ENCODE measurements at regions of chr19 and their contacts with region 1.

Region 1: DNA sequence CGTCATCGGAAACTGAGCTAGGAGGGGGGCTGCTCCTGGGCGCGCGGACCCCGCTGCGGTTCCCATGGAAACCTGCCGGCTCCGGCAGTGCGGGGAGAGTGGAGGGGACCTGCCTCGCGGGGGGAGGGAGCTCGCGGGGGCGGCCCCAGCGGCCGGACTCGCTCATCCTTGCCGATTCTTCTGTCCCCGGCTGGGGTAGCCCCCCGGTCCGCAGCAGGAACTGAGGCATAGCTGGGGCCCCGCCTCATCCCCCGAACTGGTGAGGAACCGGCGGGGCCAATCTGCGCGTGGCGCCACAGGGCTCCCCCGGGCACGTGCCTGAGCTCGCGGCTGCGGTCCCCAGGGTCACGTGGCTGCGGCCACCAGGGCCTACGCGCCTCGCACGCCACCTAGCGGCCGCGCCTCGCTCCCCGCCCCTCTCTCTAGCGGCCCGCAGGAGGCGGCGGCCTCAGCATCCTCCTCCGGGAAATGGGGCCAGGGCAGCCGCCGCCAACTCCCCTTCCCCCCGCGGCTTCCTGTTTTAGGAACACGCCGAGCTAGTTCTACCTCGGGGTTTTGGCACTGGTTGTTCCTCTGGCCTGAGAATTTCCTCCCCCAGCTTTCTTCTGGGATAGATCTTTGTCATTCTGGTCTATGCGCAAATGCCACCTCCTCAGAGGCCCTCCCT is 1.7 kb upstream of the ELAVL3 start:
- DNase-seq: peak; percentile 79 to 88 (median 85)
- H3K4me3 ChIP-seq: peak overlapping the region in 1 of 2 donors; percentile 35
- H3K4me3 Mint-ChIP-seq: peak overlapping the region; percentile 58 to 75 (median 70)
- H3K27ac ChIP-seq: no peak overlapping the region
- H3K27ac Mint-ChIP-seq: peak overlapping the region in 6 of 7 donors; percentile 8 to 89 (median 74)
- H3K4me1 ChIP-seq: peaks cover 24% of the 10 kb centered on the region
- H3K4me1 Mint-ChIP-seq: peaks cover 8 to 37% (median 20%) of the 10 kb centered on the region in 4 donors
- H3K27me3 ChIP-seq: peaks cover 12% of the 10 kb centered on the region
- H3K27me3 Mint-ChIP-seq: peaks cover 18 to 23% of the 10 kb centered on the region in 2 donors

Region 2: GRCh38 chr19:11137542-11138384 is 344.8 kb before region 1 on chr19:
- CTCF ChIA-PET with region 1: interaction called, 5 read pairs
- POLR2A ChIA-PET with region 1: no interaction called
- intact Hi-C with region 1: loop called (anchors 1 kb)
- DNase-seq: peak; percentile 52 to 67 (median 54)
- H3K4me3 ChIP-seq: peak overlapping the region; percentile 52 to 60
- H3K4me3 Mint-ChIP-seq: peak overlapping the region; percentile 80 to 92 (median 87)
- H3K27ac ChIP-seq: no peak overlapping the region
- H3K27ac Mint-ChIP-seq: peak overlapping the region in 6 of 7 donors; percentile 13 to 91 (median 86)
- H3K4me1 ChIP-seq: peaks cover 15% of the 10 kb centered on the region
- H3K4me1 Mint-ChIP-seq: peaks cover 8 to 21% (median 9%) of the 10 kb centered on the region in 4 donors
- H3K27me3 ChIP-seq: no peaks in the 10 kb centered on the region
- H3K27me3 Mint-ChIP-seq: no peaks in the 10 kb centered on the region

Region 3: GRCh38 chr19:11242864-11243797 is 239.4 kb before region 1 on chr19:
- CTCF ChIA-PET with region 1: interaction called, 4 read pairs
- POLR2A ChIA-PET with region 1: no interaction called
- intact Hi-C with region 1: loop called (anchors 5 kb)
- DNase-seq: peak; percentile 67 to 72 (median 70)
- H3K4me3 ChIP-seq: no peak overlapping the region
- H3K4me3 Mint-ChIP-seq: peak overlapping the region in 2 of 8 donors; percentile 17 to 65
- H3K27ac ChIP-seq: no peak overlapping the region
- H3K27ac Mint-ChIP-seq: peak overlapping the region in 2 of 7 donors; percentile 30 to 76
- H3K4me1 ChIP-seq: peaks cover 5% of the 10 kb centered on the region
- H3K4me1 Mint-ChIP-seq: peaks cover 2 to 6% (median 4%) of the 10 kb centered on the region in 4 donors
- H3K27me3 ChIP-seq: peaks cover 3% of the 10 kb centered on the region
- H3K27me3 Mint-ChIP-seq: peaks cover 6 to 8% of the 10 kb centered on the region in 2 donors

Region 4: GRCh38 chr19:11293433-11294389 is 188.8 kb before region 1 on chr19:
- CTCF ChIA-PET with region 1: interaction called, 56 read pairs
- POLR2A ChIA-PET with region 1: interaction called, 5 read pairs
- intact Hi-C with region 1: loop called (anchors 1 kb)
- DNase-seq: peak; percentile 64 to 75 (median 71)
- H3K4me3 ChIP-seq: no peak overlapping the region
- H3K4me3 Mint-ChIP-seq: peak overlapping the region in 3 of 8 donors; percentile 20 to 71 (median 48)
- H3K27ac ChIP-seq: no peak overlapping the region
- H3K27ac Mint-ChIP-seq: peak overlapping the region in 2 of 7 donors; percentile 41 to 46
- H3K4me1 ChIP-seq: peaks cover 8% of the 10 kb centered on the region
- H3K4me1 Mint-ChIP-seq: peaks cover 4 to 8% (median 7%) of the 10 kb centered on the region in 4 donors
- H3K27me3 ChIP-seq: no peaks in the 10 kb centered on the region
- H3K27me3 Mint-ChIP-seq: peaks cover 12 to 16% of the 10 kb centered on the region in 2 donors

Region 5: DNA sequence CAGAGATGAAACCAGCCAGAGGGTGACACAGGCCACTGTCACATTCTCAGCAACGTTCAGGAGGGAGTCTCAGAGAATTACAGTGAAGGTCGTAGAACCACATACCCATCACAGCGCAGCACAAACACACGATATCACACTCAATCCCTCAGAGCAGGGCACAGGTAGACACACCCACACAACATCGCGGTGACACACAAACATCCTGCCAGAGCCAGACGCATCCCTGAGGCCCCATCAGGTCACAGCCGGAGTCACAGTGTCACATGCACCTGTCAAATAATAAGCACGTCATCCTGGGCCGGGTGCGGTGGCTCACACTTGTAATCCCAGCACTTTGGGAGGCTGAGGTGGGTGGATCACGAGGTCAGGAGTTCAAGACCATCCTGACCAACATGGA is 19.1 kb before region 1 on chr19:
- CTCF ChIA-PET with region 1: interaction called, 11 read pairs
- POLR2A ChIA-PET with region 1: no interaction called
- intact Hi-C with region 1: no loop called
- DNase-seq: peak in 4 of 5 donors; percentile 19 to 53 (median 44)
- H3K4me3 ChIP-seq: no peak overlapping the region
- H3K4me3 Mint-ChIP-seq: no peak overlapping the region
- H3K27ac ChIP-seq: no peak overlapping the region
- H3K27ac Mint-ChIP-seq: peak overlapping the region in 1 of 7 donors; percentile 79
- H3K4me1 ChIP-seq: no peaks in the 10 kb centered on the region
- H3K4me1 Mint-ChIP-seq: peaks cover 0 to 4% (median 2%) of the 10 kb centered on the region in 4 donors
- H3K27me3 ChIP-seq: no peaks in the 10 kb centered on the region
- H3K27me3 Mint-ChIP-seq: peaks cover 10 to 12% of the 10 kb centered on the region in 2 donors

Region 6: DNA sequence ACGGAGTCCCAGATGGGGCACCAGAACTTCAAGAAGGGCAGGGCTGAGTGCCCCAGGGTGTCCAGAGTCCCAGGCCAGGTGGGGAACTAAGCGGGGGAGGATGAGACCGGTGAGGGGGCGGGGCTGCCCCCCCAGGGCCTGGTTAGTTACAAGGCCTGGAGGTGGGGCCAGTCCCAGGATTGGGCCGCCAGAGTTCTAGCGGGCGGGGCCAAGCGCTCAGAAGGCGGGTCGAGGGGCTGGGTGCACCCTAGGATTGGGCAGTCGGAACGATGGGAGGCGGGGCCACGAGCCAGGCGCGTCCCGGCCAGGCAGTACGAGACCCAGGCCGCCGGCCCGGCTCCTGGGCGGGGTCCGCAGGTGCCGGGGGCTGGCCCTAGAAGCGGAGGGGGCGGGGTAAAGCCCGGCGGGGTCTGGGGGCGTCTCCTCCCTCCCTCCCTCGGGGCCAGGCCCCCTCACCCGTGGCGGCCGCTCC is 22.6 kb after region 1 on chr19:
- CTCF ChIA-PET with region 1: interaction called, 7 read pairs
- POLR2A ChIA-PET with region 1: no interaction called
- intact Hi-C with region 1: loop called (anchors 1 kb)
- DNase-seq: peak; percentile 95 to 97 (median 96)
- H3K4me3 ChIP-seq: peak overlapping the region; percentile 59 to 71
- H3K4me3 Mint-ChIP-seq: peak overlapping the region; percentile 79 to 94 (median 86)
- H3K27ac ChIP-seq: peak overlapping the region; percentile 95
- H3K27ac Mint-ChIP-seq: peak overlapping the region; percentile 88 to 94 (median 92)
- H3K4me1 ChIP-seq: peaks cover 14% of the 10 kb centered on the region
- H3K4me1 Mint-ChIP-seq: peaks cover 15 to 28% (median 18%) of the 10 kb centered on the region in 4 donors
- H3K27me3 ChIP-seq: no peaks in the 10 kb centered on the region
- H3K27me3 Mint-ChIP-seq: no peaks in the 10 kb centered on the region

Region 7: DNA sequence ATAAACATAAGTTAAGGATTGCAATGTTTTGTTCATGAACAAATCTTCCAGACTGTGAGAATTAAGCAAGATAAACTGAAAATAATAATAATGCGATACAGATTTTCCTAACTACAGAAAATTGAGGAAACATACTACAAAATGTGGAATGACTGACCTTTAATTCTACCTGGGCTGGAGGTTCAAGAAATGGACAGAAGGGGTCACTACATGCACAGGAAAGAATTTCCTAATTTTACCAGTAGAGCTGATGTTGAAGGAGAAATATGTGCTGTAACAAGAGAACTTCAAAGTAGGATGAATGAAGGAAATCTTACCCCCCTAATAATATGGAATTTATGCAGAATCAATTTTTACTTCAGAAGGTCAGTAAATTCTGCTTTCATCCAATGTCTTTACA is 177.1 kb after region 1 on chr19:
- CTCF ChIA-PET with region 1: no interaction called
- POLR2A ChIA-PET with region 1: no interaction called
- intact Hi-C with region 1: no loop called
- DNase-seq: no peak
- H3K4me3 ChIP-seq: no peak overlapping the region
- H3K4me3 Mint-ChIP-seq: no peak overlapping the region
- H3K27ac ChIP-seq: no peak overlapping the region
- H3K27ac Mint-ChIP-seq: no peak overlapping the region
- H3K4me1 ChIP-seq: no peaks in the 10 kb centered on the region
- H3K4me1 Mint-ChIP-seq: no peaks in the 10 kb centered on the region
- H3K27me3 ChIP-seq: no peaks in the 10 kb centered on the region
- H3K27me3 Mint-ChIP-seq: peaks cover 0 to 3% of the 10 kb centered on the region in 2 donors